Activated T-helper 1 cell treated with anti-CD3 and anti-CD28 coated beads, Interleukin-12 subunit alpha, Interleukin-12 subunit beta, Interleukin-2, Interleukin-4 antibody, amounts not matched to agents 30 ng/mL and 10 ng/mL and 1 ng/mL, durations not matched to agents 14 hours and 24 hours and 36 hours (primary cell): ENCODE measurements at regions of chr2 and their contacts with region 1.

Region 1: DNA sequence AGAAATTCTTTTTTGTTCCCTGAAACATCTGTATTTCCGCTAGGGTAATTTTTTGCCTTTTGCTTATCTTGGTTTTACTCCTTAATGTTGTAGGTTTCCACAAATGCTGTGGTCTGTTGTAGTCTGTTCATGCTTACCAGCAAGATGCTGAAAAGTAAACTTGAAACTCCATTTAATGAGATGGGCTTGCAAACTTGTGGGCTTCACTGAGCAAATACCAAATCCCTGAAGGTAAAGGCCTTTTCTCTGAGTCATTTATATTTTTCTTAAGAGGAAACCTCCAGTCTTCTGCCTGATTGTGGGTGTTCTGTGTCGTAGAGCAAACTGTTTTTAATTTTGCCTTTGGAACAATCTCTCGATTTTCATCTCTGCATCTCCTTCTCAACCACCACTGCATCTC is 9.3 kb downstream of the SP140 start:
- DNase-seq: no peak
- H3K4me3 Mint-ChIP-seq: peak overlapping the region; percentile 72
- H3K27ac Mint-ChIP-seq: peak overlapping the region; percentile 96
- H3K4me1 Mint-ChIP-seq: peaks cover 60% of the 10 kb centered on the region
- H3K27me3 Mint-ChIP-seq: no peaks in the 10 kb centered on the region

Region 2: DNA sequence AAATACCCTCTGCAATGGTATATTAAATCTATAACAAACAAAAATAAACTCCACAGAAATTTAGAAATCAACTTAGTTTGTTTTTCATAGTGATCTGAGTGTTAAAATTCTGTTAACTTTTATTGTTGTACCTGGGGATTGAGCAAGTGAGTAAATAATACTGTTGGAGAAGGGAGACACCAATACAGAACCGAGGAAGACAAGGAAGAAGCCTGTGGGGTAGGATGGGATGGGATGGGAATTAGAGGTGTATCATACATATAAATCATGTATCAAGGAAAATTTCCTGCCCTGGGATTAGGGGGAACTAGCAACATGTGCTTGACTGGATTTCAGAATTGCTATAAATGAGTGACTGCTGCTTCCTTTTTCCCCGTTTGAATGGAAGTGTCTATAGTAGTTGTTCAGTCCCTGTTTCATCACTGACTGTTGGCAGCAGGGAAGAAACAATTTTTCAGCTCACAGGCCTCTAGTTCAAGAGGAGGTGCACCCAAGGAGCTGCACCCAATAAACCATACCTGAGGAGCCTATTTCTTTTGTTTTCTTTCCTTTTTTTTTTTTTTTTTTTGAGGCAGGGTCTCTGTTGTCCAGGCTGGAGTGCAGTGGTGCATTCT is 68.2 kb before region 1 on chr2:
- intact Hi-C with region 1: no loop called
- DNase-seq: no peak
- H3K4me3 Mint-ChIP-seq: no peak overlapping the region
- H3K27ac Mint-ChIP-seq: no peak overlapping the region
- H3K4me1 Mint-ChIP-seq: peaks cover 15% of the 10 kb centered on the region
- H3K27me3 Mint-ChIP-seq: no peaks in the 10 kb centered on the region

Region 3: GRCh38 chr2:230179907-230180306 is 54.9 kb before region 1 on chr2:
- intact Hi-C with region 1: no loop called
- DNase-seq: no peak
- H3K4me3 Mint-ChIP-seq: no peak overlapping the region
- H3K27ac Mint-ChIP-seq: peak overlapping the region; percentile 10
- H3K4me1 Mint-ChIP-seq: no peaks in the 10 kb centered on the region
- H3K27me3 Mint-ChIP-seq: no peaks in the 10 kb centered on the region

Region 4: GRCh38 chr2:230219419-230220331 is 15.2 kb before region 1 on chr2 and contains the start of gene SP110:
- intact Hi-C with region 1: loop called (anchors 2 kb)
- DNase-seq: peak; percentile 84
- H3K4me3 Mint-ChIP-seq: peak within 1 kb of the TSS; percentile 93
- H3K27ac Mint-ChIP-seq: peak within 1 kb of the TSS; percentile 95
- H3K4me1 Mint-ChIP-seq: peaks cover 76% of the 10 kb centered on the region
- H3K27me3 Mint-ChIP-seq: no peaks in the 10 kb centered on the region
- total RNA-seq, gene SP110: 141 and 142 TPM in 2 replicates

Region 5: DNA sequence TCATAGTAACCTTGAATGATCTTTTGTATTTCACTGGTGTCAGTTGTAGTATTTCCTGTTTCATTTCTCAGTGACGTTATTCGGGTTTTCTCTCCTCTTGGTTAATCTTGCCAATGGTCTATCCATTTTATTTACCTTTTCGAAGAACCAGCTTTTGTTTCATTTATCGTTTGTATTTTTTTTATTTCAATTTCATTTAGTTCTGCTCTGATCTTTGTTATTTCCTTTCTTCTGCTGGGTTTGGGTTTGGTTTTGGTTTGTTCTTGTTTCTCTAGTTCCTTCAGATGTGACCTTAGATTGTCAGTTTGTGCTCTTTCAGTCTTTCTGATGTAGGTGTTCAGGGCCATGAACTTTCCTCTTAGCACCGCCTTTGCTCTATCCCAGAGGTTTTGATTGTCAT is 27.4 kb after region 1 on chr2:
- intact Hi-C with region 1: loop called (anchors 1 kb)
- DNase-seq: no peak
- H3K4me3 Mint-ChIP-seq: peak overlapping the region; percentile 61
- H3K27ac Mint-ChIP-seq: peak overlapping the region; percentile 81
- H3K4me1 Mint-ChIP-seq: peaks cover 72% of the 10 kb centered on the region
- H3K27me3 Mint-ChIP-seq: no peaks in the 10 kb centered on the region